CD4-positive, alpha-beta T cell (primary cell): ENCODE measurements at regions of chr11 and their contacts with region 1.

Region 1: GRCh38 chr11:7688238-7688826 is 15.0 kb upstream of the CYB5R2 start:
- DNase-seq: peak in 4 of 14 experiments; percentile 13 to 55 (median 36)
- ATAC-seq: peak; percentile 51
- H3K4me3 ChIP-seq: no peak overlapping the region
- H3K4me3 Mint-ChIP-seq: no peak overlapping the region
- H3K27ac ChIP-seq: no peak overlapping the region
- H3K27ac Mint-ChIP-seq: no peak overlapping the region
- H3K4me1 ChIP-seq: no peaks in the 10 kb centered on the region
- H3K4me1 Mint-ChIP-seq: no peaks in the 10 kb centered on the region
- H3K27me3 ChIP-seq: peaks cover 8 to 28% of the 10 kb centered on the region in 2 experiments
- H3K27me3 Mint-ChIP-seq: peaks cover 47% of the 10 kb centered on the region
- CTCF ChIP-seq: peak; percentile 89

Region 2: DNA sequence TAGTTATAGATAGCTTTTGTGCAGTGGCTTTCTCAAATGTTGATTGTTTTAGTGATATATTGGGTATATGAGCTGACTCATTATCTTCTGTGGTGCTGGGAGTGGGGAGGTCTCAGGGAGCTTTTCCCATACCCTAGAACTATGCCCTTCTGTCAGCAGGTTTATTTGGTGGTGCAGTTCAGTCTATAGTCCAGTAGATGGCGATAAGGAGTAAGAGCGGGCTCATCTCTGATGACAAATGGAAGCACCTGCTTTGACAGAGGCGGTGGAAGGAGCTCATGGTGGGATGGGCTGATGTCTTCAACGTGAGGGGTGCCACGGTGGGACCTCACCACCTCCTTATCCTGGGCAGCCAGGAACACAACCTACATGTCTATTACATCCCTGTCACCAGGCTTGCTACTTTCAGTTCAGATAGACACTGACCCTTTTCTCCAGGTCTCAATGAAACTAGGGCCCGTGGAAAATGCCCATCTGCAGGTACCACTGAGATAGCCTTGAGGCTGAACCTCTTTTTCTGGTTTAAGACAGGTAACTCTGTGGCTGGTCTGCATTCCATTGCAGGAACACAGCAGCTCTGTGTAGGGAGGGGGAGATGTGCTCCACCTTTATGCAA is 875.8 kb before region 1 on chr11:
- CTCF ChIA-PET with region 1: no interaction called
- POLR2A ChIA-PET with region 1: no interaction called
- intact Hi-C with region 1: loop called in 1 of 2 experiments (anchors 5 kb)
- DNase-seq: peak in 9 of 14 experiments; percentile 1 to 68 (median 18)
- ATAC-seq: peak; percentile 88
- H3K4me3 ChIP-seq: no peak overlapping the region
- H3K4me3 Mint-ChIP-seq: no peak overlapping the region
- H3K27ac ChIP-seq: no peak overlapping the region
- H3K27ac Mint-ChIP-seq: no peak overlapping the region
- H3K4me1 ChIP-seq: peaks cover 4% of the 10 kb centered on the region
- H3K4me1 Mint-ChIP-seq: no peaks in the 10 kb centered on the region
- H3K27me3 ChIP-seq: no peaks in the 10 kb centered on the region
- H3K27me3 Mint-ChIP-seq: peaks cover 49% of the 10 kb centered on the region
- CTCF ChIP-seq: peak; percentile 91

Region 3: GRCh38 chr11:7098235-7098832 is 590.0 kb before region 1 on chr11:
- CTCF ChIA-PET with region 1: interaction called, 3 read pairs
- POLR2A ChIA-PET with region 1: no interaction called
- intact Hi-C with region 1: loop called in 1 of 2 experiments (anchors 2 kb)
- DNase-seq: peak in 3 of 14 experiments; percentile 47 to 73 (median 64)
- ATAC-seq: peak; percentile 54
- H3K4me3 ChIP-seq: no peak overlapping the region
- H3K4me3 Mint-ChIP-seq: no peak overlapping the region
- H3K27ac ChIP-seq: no peak overlapping the region
- H3K27ac Mint-ChIP-seq: no peak overlapping the region
- H3K4me1 ChIP-seq: no peaks in the 10 kb centered on the region
- H3K4me1 Mint-ChIP-seq: no peaks in the 10 kb centered on the region
- H3K27me3 ChIP-seq: peaks cover 0 to 30% of the 10 kb centered on the region in 2 experiments
- H3K27me3 Mint-ChIP-seq: peaks cover 31% of the 10 kb centered on the region
- CTCF ChIP-seq: peak; percentile 72

Region 4: DNA sequence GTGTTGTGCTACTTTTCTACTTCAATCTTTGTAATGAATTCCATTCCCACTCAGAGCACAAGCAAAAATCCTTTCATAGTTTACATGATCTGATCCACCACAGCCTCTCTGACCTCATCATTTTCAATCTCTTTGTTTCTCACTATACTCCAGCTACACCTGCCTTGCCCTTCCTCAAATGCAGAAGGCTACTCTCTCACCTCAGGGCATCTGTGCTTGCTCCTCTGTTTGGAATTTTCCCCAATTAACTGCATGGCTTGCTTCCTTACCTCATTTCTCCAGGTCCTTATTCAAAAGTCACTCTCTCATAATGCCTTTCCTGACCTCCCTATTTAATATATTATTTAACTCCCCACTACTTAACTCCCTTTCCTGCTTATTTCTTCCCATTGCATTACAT is 303.6 kb before region 1 on chr11:
- CTCF ChIA-PET with region 1: no interaction called
- POLR2A ChIA-PET with region 1: no interaction called
- intact Hi-C with region 1: no loop called
- DNase-seq: no peak
- ATAC-seq: no peak
- H3K4me3 ChIP-seq: no peak overlapping the region
- H3K4me3 Mint-ChIP-seq: no peak overlapping the region
- H3K27ac ChIP-seq: no peak overlapping the region
- H3K27ac Mint-ChIP-seq: no peak overlapping the region
- H3K4me1 ChIP-seq: no peaks in the 10 kb centered on the region
- H3K4me1 Mint-ChIP-seq: no peaks in the 10 kb centered on the region
- H3K27me3 ChIP-seq: no peaks in the 10 kb centered on the region
- H3K27me3 Mint-ChIP-seq: peaks cover 36% of the 10 kb centered on the region
- CTCF ChIP-seq: no peak

Region 5: GRCh38 chr11:7571640-7572000 is 116.7 kb before region 1 on chr11:
- CTCF ChIA-PET with region 1: no interaction called
- POLR2A ChIA-PET with region 1: no interaction called
- intact Hi-C with region 1: loop called in 1 of 2 experiments (anchors 5 kb)
- DNase-seq: peak in 2 of 14 experiments; percentile 23 to 26
- ATAC-seq: no peak
- H3K4me3 ChIP-seq: no peak overlapping the region
- H3K4me3 Mint-ChIP-seq: no peak overlapping the region
- H3K27ac ChIP-seq: no peak overlapping the region
- H3K27ac Mint-ChIP-seq: no peak overlapping the region
- H3K4me1 ChIP-seq: peaks cover 8% of the 10 kb centered on the region
- H3K4me1 Mint-ChIP-seq: peaks cover 28% of the 10 kb centered on the region
- H3K27me3 ChIP-seq: peaks cover 0 to 22% of the 10 kb centered on the region in 2 experiments
- H3K27me3 Mint-ChIP-seq: no peaks in the 10 kb centered on the region
- CTCF ChIP-seq: no peak

Region 6: DNA sequence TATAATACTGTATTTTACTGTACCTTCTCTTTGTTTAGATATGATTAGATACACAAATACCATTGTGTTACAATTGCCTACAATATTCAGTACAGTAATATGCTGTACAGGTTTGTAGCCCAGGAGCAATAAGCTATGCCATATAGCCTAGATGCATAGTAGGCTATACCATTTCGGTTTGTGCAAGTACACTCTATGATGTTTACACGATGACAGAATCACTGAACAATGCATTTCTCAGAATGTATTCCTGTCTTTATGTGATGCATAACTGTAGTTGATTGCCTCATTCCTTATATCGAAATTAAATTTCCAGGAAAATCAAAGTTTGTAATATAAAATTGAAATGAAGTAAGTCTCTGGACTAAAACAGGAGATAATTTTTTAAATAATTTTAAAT is 157.7 kb after region 1 on chr11:
- CTCF ChIA-PET with region 1: no interaction called
- POLR2A ChIA-PET with region 1: no interaction called
- intact Hi-C with region 1: no loop called
- DNase-seq: no peak
- ATAC-seq: no peak
- H3K4me3 ChIP-seq: no peak overlapping the region
- H3K4me3 Mint-ChIP-seq: no peak overlapping the region
- H3K27ac ChIP-seq: no peak overlapping the region
- H3K27ac Mint-ChIP-seq: no peak overlapping the region
- H3K4me1 ChIP-seq: no peaks in the 10 kb centered on the region
- H3K4me1 Mint-ChIP-seq: no peaks in the 10 kb centered on the region
- H3K27me3 ChIP-seq: peaks cover 0 to 9% of the 10 kb centered on the region in 2 experiments
- H3K27me3 Mint-ChIP-seq: peaks cover 22% of the 10 kb centered on the region
- CTCF ChIP-seq: no peak